Dorsolateral prefrontal cortex (tissue), 120 donors: ENCODE measurements at regions of chr17 and their contacts with region 1.

Region 1: GRCh38 chr17:58219001-58219788 is at the start of gene MKS1:
- DNase-seq: peak; percentile 90 to 96 (median 95)
- H3K4me3 ChIP-seq: peak within 1 kb of the TSS; percentile 56 to 97 (median 82)
- H3K27ac ChIP-seq: peak within 1 kb of the TSS in 54 of 59 donors; percentile 36 to 91 (median 77)
- H3K27me3 ChIP-seq: no peaks in the 10 kb centered on the region
- CTCF ChIP-seq: peak; percentile 12 to 82 (median 66)
- total RNA-seq, gene MKS1: 16.0 to 48.1 (median 25.0) TPM

Region 2: DNA sequence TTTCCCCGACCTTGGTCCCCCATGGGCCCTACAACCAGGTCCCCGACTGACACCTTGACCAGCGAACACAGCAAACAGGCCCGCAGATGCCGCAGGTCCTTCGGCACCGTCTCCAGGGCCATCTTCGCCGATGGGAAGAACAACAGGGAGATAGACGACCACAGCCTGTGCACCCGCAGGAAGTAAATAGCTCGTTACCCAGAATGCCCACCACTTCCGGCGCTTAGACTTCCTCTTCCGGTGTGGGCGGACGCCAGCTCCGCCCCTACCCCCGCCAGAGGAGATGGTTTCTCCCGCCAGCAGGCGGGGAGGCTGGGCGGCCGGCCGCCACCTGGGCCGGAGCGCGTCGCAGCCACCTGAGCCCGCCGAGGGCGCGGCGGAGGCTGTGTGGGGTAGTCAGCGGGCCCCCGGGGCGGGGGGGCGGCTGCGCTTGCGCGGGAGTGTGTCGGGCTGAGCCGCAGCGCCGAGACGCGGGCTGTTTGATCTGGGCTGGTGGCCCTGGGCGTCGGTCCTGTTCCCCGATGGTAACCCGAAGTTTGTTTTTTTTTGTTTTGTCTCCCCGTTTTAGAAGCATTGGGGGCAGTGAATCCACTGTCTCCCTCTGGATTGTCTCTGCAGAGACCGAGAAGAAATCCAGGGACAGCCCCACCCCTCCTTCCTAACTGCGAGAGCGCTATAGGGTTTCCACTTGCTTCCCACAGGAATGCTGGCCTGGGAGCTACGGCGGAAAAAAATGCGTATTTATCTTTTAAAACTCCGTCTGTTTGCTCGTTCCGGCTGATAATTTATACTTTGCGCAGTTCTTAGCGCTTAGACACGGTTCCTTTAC is 133.0 kb after region 1 on chr17 and contains the start of gene SUPT4H1:
- intact Hi-C with region 1: loop called in 1 of 2 experiments (anchors 2 kb)
- DNase-seq: peak; percentile 71 to 92 (median 78)
- H3K4me3 ChIP-seq: peak within 1 kb of the TSS; percentile 71 to 100 (median 93)
- H3K27ac ChIP-seq: peak within 1 kb of the TSS; percentile 66 to 98 (median 93)
- H3K27me3 ChIP-seq: no peaks in the 10 kb centered on the region
- CTCF ChIP-seq: peak in 36 of 56 donors; percentile 13 to 57 (median 34)
- total RNA-seq, gene SUPT4H1: 34.1 to 73.3 (median 52.1) TPM